Activated CD4-positive, alpha-beta T cell treated with anti-CD3 and anti-CD28 coated beads for 36 hours (primary cell): ENCODE measurements at regions of chr19 and their contacts with region 1.

Region 1: DNA sequence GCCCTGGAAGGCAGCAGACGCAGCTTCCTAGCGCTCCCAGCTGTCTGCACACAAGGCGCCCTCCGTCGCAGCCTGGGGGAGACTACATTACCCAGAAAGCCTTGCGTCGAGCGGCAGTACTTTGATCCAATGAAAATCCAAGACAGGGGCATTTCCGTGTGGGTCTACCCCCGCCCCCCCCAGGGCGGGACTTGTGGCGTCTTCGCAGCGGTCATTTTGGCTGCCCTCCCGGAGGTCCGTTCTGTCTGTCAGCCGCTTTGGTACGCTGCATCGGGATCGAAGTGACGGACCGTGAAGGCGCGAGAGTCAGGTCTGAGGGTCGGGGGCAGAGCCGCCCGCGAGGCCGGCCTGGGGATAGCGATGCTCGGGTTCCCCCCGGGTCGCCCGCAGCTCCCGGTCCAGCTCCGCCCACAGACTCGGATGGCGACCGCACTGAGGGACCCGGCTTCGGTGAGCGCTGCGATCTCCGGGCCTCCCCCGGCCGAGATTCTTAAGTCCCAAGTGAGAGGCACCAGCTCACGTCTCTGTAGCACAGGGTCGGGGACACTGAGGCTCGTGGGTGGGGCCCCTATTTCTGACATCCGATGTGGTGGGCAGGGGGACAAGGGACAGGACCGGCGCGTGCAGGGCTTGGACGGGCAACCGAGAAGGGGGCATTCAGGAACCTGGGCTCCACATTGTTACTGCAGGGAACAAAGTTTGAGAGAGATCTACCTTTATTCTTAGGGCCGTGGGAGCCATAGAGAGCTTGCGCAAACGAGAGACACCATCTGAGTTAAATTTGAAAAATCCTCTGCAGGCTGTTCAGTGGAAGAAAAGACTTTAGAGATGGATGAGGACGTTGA is at the start of gene ZNF211:
- DNase-seq: peak; percentile 91
- ATAC-seq: peak; percentile 100
- H3K4me3 Mint-ChIP-seq: peak within 1 kb of the TSS; percentile 96
- H3K27ac Mint-ChIP-seq: peak within 1 kb of the TSS; percentile 86
- H3K4me1 Mint-ChIP-seq: peaks cover 19% of the 10 kb centered on the region
- H3K27me3 Mint-ChIP-seq: no peaks in the 10 kb centered on the region
- total RNA-seq, gene ZNF211: 8.9 to 9.5 TPM

Region 2: DNA sequence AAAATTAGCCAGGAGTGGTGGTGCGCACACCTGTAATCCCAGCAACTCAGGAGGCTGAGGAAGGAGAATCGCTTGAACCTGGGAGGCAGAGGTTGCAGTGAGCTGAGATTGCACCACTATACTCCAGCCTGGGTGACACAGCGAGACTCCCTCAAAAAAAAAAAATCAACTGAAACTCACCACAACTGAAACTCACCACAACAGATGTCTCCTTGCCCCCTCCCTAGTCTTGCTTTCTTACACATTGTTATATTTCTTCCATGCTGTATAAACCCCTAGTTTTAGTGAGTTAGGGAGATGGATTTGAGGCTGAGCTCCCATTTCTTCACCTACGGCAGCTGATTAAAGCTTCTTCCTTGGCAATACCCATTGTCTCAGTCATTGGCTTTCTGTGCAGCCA is 491.5 kb before region 1 on chr19:
- CTCF ChIA-PET with region 1: no interaction called
- POLR2A ChIA-PET with region 1: no interaction called
- intact Hi-C with region 1: no loop called
- DNase-seq: no peak
- ATAC-seq: no peak
- H3K4me3 Mint-ChIP-seq: no peak overlapping the region
- H3K27ac Mint-ChIP-seq: no peak overlapping the region
- H3K4me1 Mint-ChIP-seq: no peaks in the 10 kb centered on the region
- H3K27me3 Mint-ChIP-seq: no peaks in the 10 kb centered on the region

Region 3: DNA sequence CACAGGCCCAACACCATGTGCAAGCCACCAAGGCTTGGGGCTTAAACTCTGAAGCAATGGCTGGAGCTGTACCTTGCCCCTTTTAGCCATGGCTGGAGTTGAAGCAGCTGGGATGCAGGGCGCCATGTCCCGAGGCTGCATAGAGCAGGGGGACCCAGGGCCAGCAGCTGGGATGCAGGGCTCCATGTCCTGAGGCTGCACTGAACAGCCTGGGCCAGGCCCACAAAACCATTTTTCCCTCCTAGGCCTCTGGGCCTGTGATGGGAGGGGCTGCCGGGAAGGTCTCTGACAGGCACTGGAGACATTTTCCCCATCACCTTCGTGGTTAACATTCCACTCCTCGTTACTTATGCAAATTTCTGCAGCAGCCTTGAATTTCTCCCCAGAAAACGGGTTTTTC is 259.0 kb before region 1 on chr19:
- CTCF ChIA-PET with region 1: no interaction called
- POLR2A ChIA-PET with region 1: no interaction called
- intact Hi-C with region 1: no loop called
- DNase-seq: no peak
- ATAC-seq: no peak
- H3K4me3 Mint-ChIP-seq: no peak overlapping the region
- H3K27ac Mint-ChIP-seq: no peak overlapping the region
- H3K4me1 Mint-ChIP-seq: no peaks in the 10 kb centered on the region
- H3K27me3 Mint-ChIP-seq: no peaks in the 10 kb centered on the region

Region 4: DNA sequence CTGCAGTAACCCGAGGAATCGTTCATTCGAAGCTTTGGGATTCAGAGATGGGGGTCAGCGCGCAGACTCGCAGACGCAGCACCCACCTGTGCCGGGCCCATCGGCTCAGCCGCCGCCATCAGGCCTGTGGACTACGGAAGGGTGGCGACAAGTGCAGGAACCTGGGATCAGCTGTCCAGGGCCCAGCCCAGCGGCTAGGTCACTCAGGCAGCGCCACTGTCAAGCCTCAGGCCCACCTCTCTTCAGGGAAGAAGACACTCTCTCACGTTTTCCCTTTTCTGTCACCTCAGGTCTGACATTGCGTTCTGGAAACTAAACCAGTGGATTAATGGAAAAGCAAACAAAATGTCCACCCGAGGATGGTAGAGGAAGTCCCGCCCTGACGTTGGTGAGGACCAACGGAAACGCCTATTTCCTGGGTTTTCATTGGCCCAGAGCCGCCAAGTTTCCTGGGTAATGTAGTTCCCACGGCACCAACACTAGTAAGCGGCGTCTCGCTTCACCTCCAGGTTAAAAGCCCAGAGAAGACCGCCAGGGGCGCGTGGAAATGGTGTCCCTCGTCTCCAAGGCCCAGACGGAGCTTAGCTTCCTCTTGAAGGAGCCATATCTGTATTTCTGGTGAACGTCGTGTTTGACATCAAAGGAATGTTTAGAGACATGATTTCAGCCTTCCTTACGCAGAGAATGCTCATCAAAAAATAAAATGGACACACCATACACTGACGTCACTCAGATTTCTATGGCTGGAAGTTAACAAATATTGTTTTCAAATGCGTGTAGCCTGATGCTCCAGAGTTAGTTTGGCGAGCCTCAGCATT is 155.8 kb before region 1 on chr19 and contains the start of gene ZNF772:
- CTCF ChIA-PET with region 1: no interaction called
- POLR2A ChIA-PET with region 1: no interaction called
- intact Hi-C with region 1: loop called in 1 of 2 experiments (anchors 5 kb)
- DNase-seq: peak; percentile 92
- ATAC-seq: peak; percentile 100
- H3K4me3 Mint-ChIP-seq: peak within 1 kb of the TSS; percentile 76
- H3K27ac Mint-ChIP-seq: peak within 1 kb of the TSS; percentile 79
- H3K4me1 Mint-ChIP-seq: peaks cover 17% of the 10 kb centered on the region
- H3K27me3 Mint-ChIP-seq: no peaks in the 10 kb centered on the region
- total RNA-seq, gene ZNF772: 6.5 to 7.5 TPM

Region 5: GRCh38 chr19:57537953-57538547 is 95.2 kb before region 1 on chr19:
- CTCF ChIA-PET with region 1: no interaction called
- POLR2A ChIA-PET with region 1: no interaction called
- intact Hi-C with region 1: no loop called
- DNase-seq: no peak
- ATAC-seq: no peak
- H3K4me3 Mint-ChIP-seq: no peak overlapping the region
- H3K27ac Mint-ChIP-seq: no peak overlapping the region
- H3K4me1 Mint-ChIP-seq: no peaks in the 10 kb centered on the region
- H3K27me3 Mint-ChIP-seq: no peaks in the 10 kb centered on the region

Region 6: GRCh38 chr19:57583521-57584416 is 49.4 kb before region 1 on chr19 and contains the start of gene ZIK1:
- CTCF ChIA-PET with region 1: no interaction called
- POLR2A ChIA-PET with region 1: no interaction called
- intact Hi-C with region 1: loop called (anchors 1 kb)
- DNase-seq: peak; percentile 90
- ATAC-seq: peak; percentile 87
- H3K4me3 Mint-ChIP-seq: peak within 1 kb of the TSS; percentile 81
- H3K27ac Mint-ChIP-seq: peak within 1 kb of the TSS; percentile 85
- H3K4me1 Mint-ChIP-seq: peaks cover 21% of the 10 kb centered on the region
- H3K27me3 Mint-ChIP-seq: no peaks in the 10 kb centered on the region
- total RNA-seq, gene ZIK1: 4.6 to 5.3 TPM

Region 7: GRCh38 chr19:57682226-57682766 is 49.1 kb after region 1 on chr19:
- CTCF ChIA-PET with region 1: interaction called, 3 read pairs
- POLR2A ChIA-PET with region 1: interaction called, 3 read pairs
- intact Hi-C with region 1: loop called (anchors 1 kb)
- DNase-seq: no peak
- ATAC-seq: no peak
- H3K4me3 Mint-ChIP-seq: peak overlapping the region; percentile 85
- H3K27ac Mint-ChIP-seq: peak overlapping the region; percentile 93
- H3K4me1 Mint-ChIP-seq: peaks cover 31% of the 10 kb centered on the region
- H3K27me3 Mint-ChIP-seq: peaks cover under 1% of the 10 kb centered on the region

Region 8: GRCh38 chr19:57819475-57820148 is 186.4 kb after region 1 on chr19:
- CTCF ChIA-PET with region 1: no interaction called
- POLR2A ChIA-PET with region 1: no interaction called
- intact Hi-C with region 1: loop called in 1 of 2 experiments (anchors 2 kb)
- DNase-seq: peak; percentile 89
- ATAC-seq: peak; percentile 90
- H3K4me3 Mint-ChIP-seq: peak overlapping the region; percentile 97
- H3K27ac Mint-ChIP-seq: peak overlapping the region; percentile 94
- H3K4me1 Mint-ChIP-seq: peaks cover 51% of the 10 kb centered on the region
- H3K27me3 Mint-ChIP-seq: no peaks in the 10 kb centered on the region